ENCODE measurements at regions of chr20 and their contacts with region 1.

Region 1: DNA sequence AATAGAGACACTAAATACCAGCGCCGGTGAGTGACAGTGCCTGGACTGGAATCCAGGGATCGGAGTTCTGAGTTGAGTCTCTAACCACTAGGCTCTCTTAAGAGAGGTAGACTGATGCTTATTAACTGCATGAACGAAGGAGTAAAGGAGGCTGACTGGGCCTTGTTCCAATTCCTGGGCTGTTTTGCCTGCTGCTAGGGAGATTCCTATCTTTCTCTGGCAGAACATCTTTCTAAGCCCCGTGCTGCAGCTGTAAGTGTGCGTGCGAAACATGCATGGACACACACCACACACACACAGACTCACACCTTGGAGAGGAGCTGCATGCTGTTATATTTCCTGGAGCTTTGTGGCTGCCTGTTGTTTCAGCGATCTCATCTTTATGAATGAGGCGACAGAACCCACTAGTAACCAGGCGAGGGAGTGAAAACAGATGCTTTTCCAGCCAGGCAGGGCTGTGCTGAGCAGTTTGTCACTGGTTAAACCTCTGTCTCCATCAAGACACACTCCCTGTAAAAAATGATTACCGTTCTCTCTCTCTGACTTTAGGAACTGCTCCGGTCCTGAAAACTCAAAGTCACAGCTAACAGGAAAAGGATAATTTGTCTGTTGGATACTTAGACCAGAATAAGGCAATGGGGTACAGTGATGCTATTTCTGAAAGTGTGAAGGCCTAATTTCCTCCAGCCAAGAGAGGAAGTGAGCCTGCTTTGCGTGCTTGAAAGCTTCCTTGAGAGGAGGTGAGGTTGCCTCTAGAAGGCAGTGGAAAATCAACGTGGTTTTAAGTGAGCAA is 157.4 kb upstream of the ZNF217 start:
- DNase-seq: no peak
- H3K4me3 ChIP-seq: no peak overlapping the region
- H3K27ac ChIP-seq: peak overlapping the region; percentile 98
- H3K4me1 ChIP-seq: peaks cover 83% of the 10 kb centered on the region
- H3K27me3 ChIP-seq: no peaks in the 10 kb centered on the region
- CTCF ChIP-seq: no peak

Region 2: DNA sequence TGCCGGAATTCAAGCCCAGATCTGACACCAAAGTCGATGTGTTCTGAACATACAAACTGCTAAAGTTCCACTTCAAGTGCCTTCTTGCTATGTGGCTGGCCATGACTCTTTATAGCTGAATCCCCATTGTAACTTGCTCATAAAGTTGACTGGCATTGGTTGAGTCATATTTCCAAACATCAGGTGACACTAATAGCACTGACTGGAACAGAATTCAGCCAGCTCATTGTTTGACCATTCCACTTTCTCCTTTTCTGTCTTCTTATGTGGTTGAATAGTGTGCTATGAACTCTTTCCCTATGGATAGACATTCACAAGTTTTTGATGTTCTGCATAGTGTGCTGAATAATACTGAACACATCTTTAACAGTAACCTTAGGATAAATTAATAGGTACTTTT is 1293.2 kb before region 1 on chr20:
- CTCF ChIA-PET with region 1: no interaction called
- POLR2A ChIA-PET with region 1: no interaction called
- intact Hi-C with region 1: no loop called
- DNase-seq: peak in 1 of 2 experiments; percentile 55
- H3K4me3 ChIP-seq: no peak overlapping the region
- H3K27ac ChIP-seq: no peak overlapping the region
- H3K4me1 ChIP-seq: no peaks in the 10 kb centered on the region
- H3K27me3 ChIP-seq: no peaks in the 10 kb centered on the region
- CTCF ChIP-seq: no peak

Region 3: GRCh38 chr20:53539516-53539915 is 211.5 kb before region 1 on chr20:
- CTCF ChIA-PET with region 1: no interaction called
- POLR2A ChIA-PET with region 1: no interaction called
- intact Hi-C with region 1: no loop called
- DNase-seq: no peak
- H3K4me3 ChIP-seq: no peak overlapping the region
- H3K27ac ChIP-seq: no peak overlapping the region
- H3K4me1 ChIP-seq: no peaks in the 10 kb centered on the region
- H3K27me3 ChIP-seq: no peaks in the 10 kb centered on the region
- CTCF ChIP-seq: no peak

Region 4: GRCh38 chr20:53578492-53579222 is 172.4 kb before region 1 on chr20:
- CTCF ChIA-PET with region 1: no interaction called
- POLR2A ChIA-PET with region 1: no interaction called
- intact Hi-C with region 1: loop called (anchors 5 kb)
- DNase-seq: peak; percentile 61 to 77
- H3K4me3 ChIP-seq: peak overlapping the region; percentile 49
- H3K27ac ChIP-seq: peak overlapping the region; percentile 91
- H3K4me1 ChIP-seq: peaks cover 64% of the 10 kb centered on the region
- H3K27me3 ChIP-seq: no peaks in the 10 kb centered on the region
- CTCF ChIP-seq: peak; percentile 96

Region 5: DNA sequence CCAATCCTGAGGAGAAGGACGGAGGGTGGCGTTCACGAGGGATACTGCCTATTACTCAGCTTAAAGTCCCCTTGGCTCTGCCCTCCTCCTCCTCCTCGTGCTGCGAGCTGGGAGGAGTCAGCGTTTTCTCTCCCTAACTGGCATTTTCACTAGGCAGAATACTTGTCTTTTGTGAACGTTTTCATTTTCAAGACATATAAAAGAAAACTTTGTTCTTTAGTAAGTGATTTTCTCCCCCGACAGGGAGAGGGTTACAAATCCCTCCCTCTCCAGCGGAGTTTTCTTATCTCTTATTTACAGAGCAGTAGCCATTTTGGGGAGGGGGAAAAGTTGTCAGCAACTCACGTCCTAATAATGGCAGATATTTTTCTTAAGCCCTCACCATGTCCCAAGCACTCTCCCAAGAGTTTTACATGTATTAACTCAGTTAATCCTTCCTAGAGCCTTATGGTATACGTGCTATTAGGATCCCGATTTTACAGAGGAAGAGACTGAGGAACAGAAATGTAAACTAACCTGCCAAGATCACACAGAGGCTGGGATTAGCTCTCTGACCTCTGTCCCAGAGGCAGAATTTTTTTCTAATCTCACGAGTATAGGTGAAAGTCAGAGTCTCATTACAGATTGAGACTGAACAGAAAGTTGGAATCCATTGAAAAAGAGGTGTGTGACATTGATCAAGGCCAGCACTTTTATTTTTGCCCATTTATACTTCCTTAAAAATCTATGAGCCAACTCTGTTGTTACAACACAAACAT is 127.4 kb before region 1 on chr20:
- CTCF ChIA-PET with region 1: no interaction called
- POLR2A ChIA-PET with region 1: interaction called, 3 read pairs
- intact Hi-C with region 1: loop called (anchors 1 kb)
- DNase-seq: peak; percentile 62 to 69
- H3K4me3 ChIP-seq: peak overlapping the region; percentile 58
- H3K27ac ChIP-seq: peak overlapping the region; percentile 98
- H3K4me1 ChIP-seq: peaks cover 57% of the 10 kb centered on the region
- H3K27me3 ChIP-seq: no peaks in the 10 kb centered on the region
- CTCF ChIP-seq: no peak

Region 6: DNA sequence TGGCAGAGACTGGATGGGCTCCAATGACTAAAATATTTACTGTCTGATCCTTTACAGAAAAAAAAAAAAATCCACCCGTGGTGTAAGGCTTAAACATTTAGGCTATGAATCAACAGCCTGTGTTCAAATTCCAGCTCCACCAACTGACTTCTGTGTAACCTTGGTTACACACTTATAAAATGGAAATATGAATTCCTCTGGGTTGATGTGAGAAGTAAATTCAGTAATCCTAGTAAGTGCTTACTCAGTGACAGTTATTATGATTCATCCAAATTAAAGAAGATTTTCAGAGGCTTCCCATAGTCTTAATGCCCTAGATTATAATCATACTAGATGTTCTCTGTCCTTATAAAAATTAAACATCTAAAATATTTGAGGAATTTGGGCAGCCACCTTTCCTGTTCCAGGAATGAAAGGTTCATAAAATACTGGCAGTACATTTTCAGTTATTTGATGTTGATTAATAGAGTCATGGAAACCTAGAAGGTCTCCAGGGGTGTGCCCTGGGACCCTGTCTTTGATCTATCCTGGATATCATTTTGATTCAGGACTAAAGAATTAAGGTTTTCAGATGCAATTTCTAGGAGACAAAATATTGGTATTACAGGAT is 22.9 kb after region 1 on chr20:
- CTCF ChIA-PET with region 1: no interaction called
- POLR2A ChIA-PET with region 1: interaction called, 3 read pairs
- intact Hi-C with region 1: loop called (anchors 1 kb)
- DNase-seq: peak; percentile 37 to 99
- H3K4me3 ChIP-seq: no peak overlapping the region
- H3K27ac ChIP-seq: peak overlapping the region; percentile 93
- H3K4me1 ChIP-seq: peaks cover 41% of the 10 kb centered on the region
- H3K27me3 ChIP-seq: no peaks in the 10 kb centered on the region
- CTCF ChIP-seq: no peak

Region 7: GRCh38 chr20:53839423-53840176 is 88.6 kb after region 1 on chr20:
- CTCF ChIA-PET with region 1: no interaction called
- POLR2A ChIA-PET with region 1: no interaction called
- intact Hi-C with region 1: loop called (anchors 1 kb)
- DNase-seq: peak; percentile 75 to 93
- H3K4me3 ChIP-seq: no peak overlapping the region
- H3K27ac ChIP-seq: peak overlapping the region; percentile 71
- H3K4me1 ChIP-seq: peaks cover 33% of the 10 kb centered on the region
- H3K27me3 ChIP-seq: no peaks in the 10 kb centered on the region
- CTCF ChIP-seq: no peak

Region 8: DNA sequence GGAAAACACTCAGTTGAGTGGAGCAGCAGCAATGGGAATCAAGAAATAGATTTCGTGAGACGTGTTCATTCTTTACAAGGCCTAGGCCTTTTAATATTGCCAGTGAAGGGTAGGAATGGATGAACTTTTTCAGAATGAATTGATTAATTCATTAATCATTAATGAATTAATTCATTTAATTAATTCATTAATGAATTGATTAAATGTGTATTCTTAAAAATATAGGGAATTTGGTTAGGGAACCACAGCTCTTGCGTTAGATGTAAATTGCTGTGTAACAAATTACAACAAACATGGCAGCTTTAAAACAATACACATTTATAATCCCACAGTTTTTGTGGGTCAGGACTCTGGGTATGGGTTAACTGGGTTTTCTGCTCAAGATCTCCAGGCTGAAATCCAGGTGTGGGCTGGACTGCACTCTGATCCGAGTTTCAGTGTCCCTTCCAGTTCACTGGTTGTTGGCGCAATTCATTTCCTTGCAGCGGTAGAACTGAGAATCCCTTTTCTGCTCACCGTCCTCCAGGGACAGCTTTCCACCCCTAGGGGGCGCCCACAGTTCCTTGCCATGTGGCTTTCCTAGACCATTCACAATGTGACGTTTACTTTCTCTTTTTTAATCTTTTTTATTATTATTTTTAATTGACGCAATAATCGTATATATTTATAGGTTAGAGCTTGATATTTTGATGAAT is 352.2 kb after region 1 on chr20:
- CTCF ChIA-PET with region 1: no interaction called
- POLR2A ChIA-PET with region 1: no interaction called
- intact Hi-C with region 1: no loop called
- DNase-seq: peak in 1 of 2 experiments; percentile 51
- H3K4me3 ChIP-seq: no peak overlapping the region
- H3K27ac ChIP-seq: no peak overlapping the region
- H3K4me1 ChIP-seq: no peaks in the 10 kb centered on the region; the same call in 1 of the 2 replicates
- H3K27me3 ChIP-seq: no peaks in the 10 kb centered on the region
- CTCF ChIP-seq: peak; percentile 62

Measured in PC-9 (cell line).